CD4-positive, alpha-beta memory T cell (primary cell): ENCODE measurements at regions of chr6 and their contacts with region 1.

Region 1: GRCh38 chr6:146905181-146905704 is 299.0 kb upstream of the STXBP5 start:
- DNase-seq: no peak
- H3K4me3 ChIP-seq: no peak overlapping the region
- H3K4me3 Mint-ChIP-seq: no peak overlapping the region
- H3K27ac ChIP-seq: no peak overlapping the region
- H3K27ac Mint-ChIP-seq: no peak overlapping the region
- H3K4me1 ChIP-seq: no peaks in the 10 kb centered on the region
- H3K4me1 Mint-ChIP-seq: no peaks in the 10 kb centered on the region
- H3K27me3 ChIP-seq: no peaks in the 10 kb centered on the region
- H3K27me3 Mint-ChIP-seq: peaks cover 0 to 1% of the 10 kb centered on the region in 2 donors

Region 2: DNA sequence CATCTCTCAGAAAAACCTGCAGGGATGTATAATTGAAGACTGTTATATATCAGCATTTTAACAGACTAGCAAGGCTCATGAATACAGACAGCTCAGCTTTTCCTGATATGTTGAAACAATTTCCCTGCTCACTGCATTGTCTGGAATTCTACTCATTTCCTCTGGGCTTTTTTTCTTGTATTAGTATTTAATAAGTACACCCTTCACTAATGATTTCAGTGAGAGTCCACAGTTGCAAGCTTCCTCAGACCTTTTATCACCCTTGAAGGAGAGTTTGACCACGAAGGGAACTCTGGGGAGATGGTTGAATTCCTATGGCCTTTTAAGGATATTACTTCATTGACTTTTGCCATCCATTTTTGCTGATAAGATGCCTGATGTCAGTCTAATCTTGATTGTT is 57.8 kb before region 1 on chr6:
- CTCF ChIA-PET with region 1: no interaction called
- POLR2A ChIA-PET with region 1: no interaction called
- intact Hi-C with region 1: no loop called
- DNase-seq: no peak
- H3K4me3 ChIP-seq: no peak overlapping the region
- H3K4me3 Mint-ChIP-seq: no peak overlapping the region
- H3K27ac ChIP-seq: no peak overlapping the region
- H3K27ac Mint-ChIP-seq: no peak overlapping the region
- H3K4me1 ChIP-seq: no peaks in the 10 kb centered on the region
- H3K4me1 Mint-ChIP-seq: no peaks in the 10 kb centered on the region
- H3K27me3 ChIP-seq: no peaks in the 10 kb centered on the region
- H3K27me3 Mint-ChIP-seq: peaks cover 0 to 3% of the 10 kb centered on the region in 2 donors

Region 3: DNA sequence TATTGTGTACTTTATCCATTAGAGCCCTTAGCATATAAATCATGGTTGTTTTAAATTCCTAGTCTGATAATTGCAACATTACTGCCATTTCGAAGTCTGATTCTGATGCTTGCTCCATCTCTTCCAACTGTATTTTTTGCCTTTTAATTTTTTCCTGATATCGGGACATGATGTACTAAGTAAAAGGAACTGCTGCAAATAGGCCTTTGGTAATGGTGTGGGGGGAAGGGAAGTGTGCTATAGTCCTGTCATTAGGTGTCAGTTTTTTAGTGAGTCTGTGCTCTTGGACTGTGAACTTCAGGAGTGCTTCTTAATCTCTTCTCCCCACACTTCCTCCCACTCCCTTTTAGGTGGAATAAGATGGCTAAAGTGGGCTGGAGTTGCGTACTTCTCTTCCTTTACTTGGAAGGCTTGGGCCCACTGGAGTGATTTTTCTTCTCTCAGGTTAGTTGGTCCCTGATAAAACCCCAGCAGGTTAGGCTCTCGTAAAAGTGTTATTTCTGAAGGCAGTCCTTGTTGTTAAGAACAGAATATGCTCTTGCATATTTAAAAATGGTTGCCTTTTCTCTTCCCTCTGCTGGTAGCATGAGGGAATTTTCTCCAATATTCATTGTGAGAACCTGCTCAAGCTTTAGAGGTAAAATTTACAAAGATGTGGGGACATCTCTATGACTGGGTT is 317.1 kb after region 1 on chr6:
- CTCF ChIA-PET with region 1: interaction called, 4 read pairs
- POLR2A ChIA-PET with region 1: no interaction called
- intact Hi-C with region 1: loop called (anchors 1 kb)
- DNase-seq: peak in 4 of 5 donors; percentile 12 to 29 (median 16)
- H3K4me3 ChIP-seq: no peak overlapping the region
- H3K4me3 Mint-ChIP-seq: no peak overlapping the region
- H3K27ac ChIP-seq: no peak overlapping the region
- H3K27ac Mint-ChIP-seq: peak overlapping the region in 2 of 7 donors; percentile 12 to 82
- H3K4me1 ChIP-seq: peaks cover 12% of the 10 kb centered on the region
- H3K4me1 Mint-ChIP-seq: peaks cover 30 to 52% (median 42%) of the 10 kb centered on the region in 4 donors
- H3K27me3 ChIP-seq: no peaks in the 10 kb centered on the region
- H3K27me3 Mint-ChIP-seq: no peaks in the 10 kb centered on the region

Region 4: DNA sequence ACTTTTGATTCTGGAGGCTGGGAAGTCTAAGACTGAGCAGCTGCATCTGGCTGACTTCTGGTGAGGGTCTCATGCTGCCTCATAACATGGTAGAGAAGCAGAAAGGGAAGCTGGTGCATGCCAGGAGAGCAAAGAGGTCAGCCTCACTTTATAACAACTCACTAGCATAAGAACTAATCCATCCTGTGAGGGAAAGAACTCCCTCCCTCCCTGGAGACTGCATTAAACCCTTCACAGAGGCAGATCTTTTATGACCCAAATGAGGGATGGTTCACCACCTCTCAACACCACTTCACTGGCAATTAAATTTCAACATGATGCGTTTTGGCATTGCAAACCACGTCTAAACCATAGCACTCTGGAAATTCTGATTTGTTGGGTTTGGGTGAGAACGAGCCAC is 332.9 kb after region 1 on chr6:
- CTCF ChIA-PET with region 1: no interaction called
- POLR2A ChIA-PET with region 1: no interaction called
- intact Hi-C with region 1: no loop called
- DNase-seq: no peak
- H3K4me3 ChIP-seq: no peak overlapping the region
- H3K4me3 Mint-ChIP-seq: no peak overlapping the region
- H3K27ac ChIP-seq: no peak overlapping the region
- H3K27ac Mint-ChIP-seq: peak overlapping the region in 1 of 7 donors; percentile 17
- H3K4me1 ChIP-seq: no peaks in the 10 kb centered on the region
- H3K4me1 Mint-ChIP-seq: peaks cover 0 to 6% (median 1%) of the 10 kb centered on the region in 4 donors
- H3K27me3 ChIP-seq: no peaks in the 10 kb centered on the region
- H3K27me3 Mint-ChIP-seq: no peaks in the 10 kb centered on the region

Region 5: GRCh38 chr6:147285087-147285855 is 380.0 kb after region 1 on chr6:
- CTCF ChIA-PET with region 1: interaction called, 14 read pairs
- POLR2A ChIA-PET with region 1: no interaction called
- intact Hi-C with region 1: loop called (anchors 1 kb)
- DNase-seq: peak in 4 of 5 donors; percentile 14 to 29 (median 24)
- H3K4me3 ChIP-seq: no peak overlapping the region
- H3K4me3 Mint-ChIP-seq: peak overlapping the region in 3 of 8 donors; percentile 6 to 27 (median 7)
- H3K27ac ChIP-seq: no peak overlapping the region
- H3K27ac Mint-ChIP-seq: peak overlapping the region in 2 of 7 donors; percentile 61 to 64
- H3K4me1 ChIP-seq: peaks cover 8% of the 10 kb centered on the region
- H3K4me1 Mint-ChIP-seq: peaks cover 12 to 28% (median 15%) of the 10 kb centered on the region in 4 donors
- H3K27me3 ChIP-seq: no peaks in the 10 kb centered on the region
- H3K27me3 Mint-ChIP-seq: no peaks in the 10 kb centered on the region